ENCODE measurements at regions of chr15 and their contacts with region 1.

Region 1: DNA sequence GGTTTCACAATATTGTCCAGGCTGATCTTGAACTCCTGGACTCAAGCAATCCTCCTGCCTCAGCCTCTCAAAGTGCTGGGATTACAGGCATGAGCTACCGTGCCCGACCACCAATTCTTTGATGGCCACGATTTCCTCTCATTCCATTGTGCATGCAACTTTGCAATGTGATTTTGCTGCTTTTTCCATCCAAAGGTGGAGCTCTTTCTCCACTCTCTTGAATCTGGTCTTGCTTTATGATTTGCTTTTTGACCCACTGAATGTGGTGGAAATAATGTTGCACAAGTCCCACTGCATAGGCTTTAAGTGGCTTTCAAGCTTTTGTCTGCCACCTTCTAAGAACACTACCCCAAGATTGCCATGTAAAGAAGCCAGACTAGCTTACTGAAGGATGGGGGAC is 10.6 kb downstream of the RPS27L start:
- DNase-seq: peak; percentile 20
- ATAC-seq: no peak; the same call in 1 of the 2 replicates
- H3K4me3 ChIP-seq: no peak overlapping the region
- H3K27ac ChIP-seq: no peak overlapping the region
- H3K4me1 ChIP-seq: peaks cover 8% of the 10 kb centered on the region
- H3K27me3 ChIP-seq: no peaks in the 10 kb centered on the region
- CTCF ChIP-seq: peak; percentile 17; the same call in 1 of the 2 replicates

Region 2: GRCh38 chr15:63135804-63136203 is 10.9 kb before region 1 on chr15:
- CTCF ChIA-PET with region 1: interaction called, 7 read pairs
- POLR2A ChIA-PET with region 1: interaction called, 14 read pairs
- intact Hi-C with region 1: no loop called
- DNase-seq: peak; percentile 51
- ATAC-seq: peak; percentile 51
- H3K4me3 ChIP-seq: no peak overlapping the region
- H3K27ac ChIP-seq: peak overlapping the region; percentile 45
- H3K4me1 ChIP-seq: peaks cover 30% of the 10 kb centered on the region
- H3K27me3 ChIP-seq: no peaks in the 10 kb centered on the region
- CTCF ChIP-seq: no peak